Heart right ventricle (tissue), 16 donors: ENCODE measurements at regions of chr11 and their contacts with region 1.

Region 1: GRCh38 chr11:86938900-86939880 is 16.0 kb downstream of the FZD4 start:
- DNase-seq: peak in 1 of 2 donors; percentile 32
- ATAC-seq: peak in 4 of 8 donors; percentile 34 to 42 (median 35)
- H3K4me3 ChIP-seq: peak overlapping the region in 4 of 10 donors; percentile 24 to 38 (median 33)
- H3K27ac ChIP-seq: peak overlapping the region; percentile 66 to 88 (median 80)
- H3K4me1 ChIP-seq: peaks cover 25 to 80% (median 63%) of the 10 kb centered on the region in 9 donors
- H3K27me3 ChIP-seq: no peaks in the 10 kb centered on the region
- CTCF ChIP-seq: peak; percentile 52 to 79 (median 74)

Region 2: DNA sequence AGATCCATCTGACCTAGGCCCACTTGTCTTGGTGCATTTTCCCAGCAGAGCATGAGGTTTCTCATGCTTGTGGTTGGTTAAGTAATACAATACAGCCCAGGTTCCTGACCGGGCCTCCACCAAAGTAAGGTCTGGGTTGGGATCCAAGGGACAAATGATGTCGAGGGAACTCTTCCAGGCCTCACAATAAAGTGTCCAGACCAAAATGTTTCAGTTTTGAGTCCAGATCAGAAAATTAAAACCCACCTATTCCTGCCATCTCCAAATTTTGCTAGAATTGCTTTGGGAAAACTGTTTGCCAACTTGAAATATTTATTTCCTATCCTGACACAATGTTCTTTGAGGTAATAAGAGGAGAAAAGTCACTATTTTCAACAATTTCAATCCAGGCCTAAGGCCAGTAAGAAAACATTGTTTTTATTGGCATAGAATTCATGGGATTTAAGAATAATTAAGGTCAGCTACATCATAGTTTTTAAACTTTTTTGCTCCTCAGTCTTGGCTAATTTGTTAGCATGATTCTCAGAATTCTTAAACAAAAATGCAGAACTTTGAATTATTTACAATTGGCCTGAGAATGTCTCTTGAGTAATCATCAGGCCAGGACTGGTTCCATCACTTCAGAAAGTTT is 318.2 kb before region 1 on chr11:
- intact Hi-C with region 1: loop called in 1 of 10 experiments (anchors 5 kb)
- DNase-seq: no peak
- ATAC-seq: peak in 4 of 8 donors; percentile 22 to 57 (median 40)
- H3K4me3 ChIP-seq: no peak overlapping the region
- H3K27ac ChIP-seq: peak overlapping the region in 9 of 10 donors; percentile 23 to 77 (median 45)
- H3K4me1 ChIP-seq: peaks cover 3 to 66% (median 35%) of the 10 kb centered on the region in 9 donors
- H3K27me3 ChIP-seq: no peaks in the 10 kb centered on the region
- CTCF ChIP-seq: no peak

Region 3: DNA sequence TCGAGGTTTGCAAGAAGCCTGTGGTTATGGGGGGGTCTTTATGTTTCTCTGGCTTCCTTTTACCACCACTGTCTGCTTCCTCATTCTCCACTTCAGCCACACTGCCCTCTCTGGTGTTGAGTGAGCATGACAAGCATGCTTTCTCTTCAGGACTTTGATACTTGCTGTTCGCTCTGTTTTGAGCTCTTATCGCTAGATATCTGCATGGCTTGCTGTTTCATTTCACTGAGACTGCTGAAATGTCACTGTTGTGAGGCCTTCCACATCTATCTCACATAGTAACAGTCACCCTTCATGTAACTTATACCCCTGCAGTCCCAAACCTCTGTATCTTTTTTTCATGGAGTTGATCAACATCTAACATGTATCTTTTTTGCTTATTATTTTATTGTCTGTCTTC is 158.4 kb after region 1 on chr11:
- intact Hi-C with region 1: loop called in 1 of 10 experiments (anchors 10 kb)
- DNase-seq: peak in 1 of 2 donors; percentile 28
- ATAC-seq: peak in 7 of 8 donors; percentile 16 to 79 (median 64)
- H3K4me3 ChIP-seq: no peak overlapping the region
- H3K27ac ChIP-seq: no peak overlapping the region
- H3K4me1 ChIP-seq: peaks cover 0 to 9% (median 0%) of the 10 kb centered on the region in 9 donors
- H3K27me3 ChIP-seq: no peaks in the 10 kb centered on the region
- CTCF ChIP-seq: peak; percentile 26 to 78 (median 68)

Region 4: DNA sequence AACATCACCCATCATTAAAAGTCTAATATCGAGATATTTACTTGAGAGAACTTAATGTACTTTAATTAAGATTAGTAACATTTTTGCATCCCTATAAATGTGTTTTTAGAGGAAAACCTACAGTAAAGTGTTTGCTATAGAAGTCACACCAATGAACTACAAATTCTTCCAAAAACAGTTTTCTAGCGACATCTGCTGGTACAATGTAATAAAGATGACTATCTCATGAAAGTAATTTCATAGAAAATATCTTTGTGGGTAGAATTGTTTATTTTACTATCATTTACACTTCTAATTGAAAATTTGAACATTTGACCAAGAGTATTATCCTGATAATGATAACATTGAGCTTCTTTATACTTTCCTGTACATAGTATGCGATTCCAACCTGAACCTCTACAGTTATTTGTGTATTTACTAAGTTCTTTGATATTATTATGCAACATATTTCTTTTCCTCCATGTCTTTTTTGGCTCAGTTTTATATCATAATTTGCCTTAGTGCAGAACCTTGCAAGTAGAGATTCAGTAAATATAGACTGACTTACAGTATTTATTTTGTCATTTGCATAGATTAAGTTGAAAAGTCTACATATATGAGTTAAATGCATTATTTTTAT is 351.2 kb after region 1 on chr11:
- intact Hi-C with region 1: loop called in 7 of 10 experiments (anchors 1 to 5 kb)
- DNase-seq: no peak
- ATAC-seq: peak in 2 of 8 donors; percentile 35 to 57
- H3K4me3 ChIP-seq: no peak overlapping the region
- H3K27ac ChIP-seq: no peak overlapping the region
- H3K4me1 ChIP-seq: no peaks in the 10 kb centered on the region
- H3K27me3 ChIP-seq: no peaks in the 10 kb centered on the region
- CTCF ChIP-seq: peak; percentile 30 to 83 (median 75)

Region 5: DNA sequence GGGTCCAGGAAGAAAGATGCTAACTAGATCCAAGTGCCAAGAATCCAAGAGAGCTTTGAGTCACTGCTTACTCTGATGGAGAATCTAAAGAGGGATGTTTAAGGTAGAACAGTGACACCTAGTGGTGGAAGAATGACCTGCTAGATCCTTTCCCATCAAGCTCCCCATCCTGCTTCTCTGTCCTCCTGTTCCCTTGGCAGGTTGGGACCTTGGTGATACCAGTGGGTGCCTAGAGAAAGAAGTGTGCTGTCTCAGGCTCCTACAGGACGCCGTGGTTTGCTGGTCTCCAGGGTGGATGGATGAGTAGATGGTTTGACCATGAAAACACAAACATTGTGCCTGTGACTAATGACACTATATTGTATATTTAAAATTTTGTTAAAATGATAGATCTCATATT is 482.2 kb after region 1 on chr11:
- intact Hi-C with region 1: loop called in 6 of 10 experiments (anchors 5 to 10 kb)
- DNase-seq: peak in 1 of 2 donors; percentile 67
- ATAC-seq: peak; percentile 80 to 89 (median 86)
- H3K4me3 ChIP-seq: no peak overlapping the region
- H3K27ac ChIP-seq: peak overlapping the region in 1 of 10 donors; percentile 37
- H3K4me1 ChIP-seq: peaks cover 0 to 22% (median 11%) of the 10 kb centered on the region in 9 donors
- H3K27me3 ChIP-seq: no peaks in the 10 kb centered on the region
- CTCF ChIP-seq: peak; percentile 67 to 89 (median 85)